GM12878 (cell line): ENCODE measurements at regions of chr20 and their contacts with region 1.

Region 1: DNA sequence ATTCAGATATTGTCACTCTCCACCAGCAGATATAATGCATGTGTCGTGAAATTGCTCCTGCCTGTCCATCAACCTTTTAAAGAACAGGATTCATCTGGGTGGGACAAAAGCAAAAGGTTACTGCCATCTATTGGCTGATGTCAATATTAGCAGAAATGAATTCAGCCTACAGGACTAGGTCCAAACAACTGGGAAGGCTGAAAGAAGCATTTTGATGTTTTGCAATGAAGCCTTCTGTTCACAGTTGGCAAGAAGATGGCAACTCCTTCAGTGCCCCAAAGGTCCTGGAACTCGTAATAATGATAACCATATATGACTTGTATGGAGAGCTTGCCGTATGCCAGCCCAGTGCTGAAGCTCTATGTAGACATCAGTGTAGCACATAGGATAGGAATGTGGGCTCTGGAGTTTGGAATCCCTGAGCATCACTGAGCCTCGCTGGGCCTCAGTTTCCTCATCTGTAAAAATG is 7.5 kb downstream of the BCAS1 start:
- DNase-seq: peak; percentile 82
- ATAC-seq: peak; percentile 42
- H3K4me3 ChIP-seq: no peak overlapping the region
- H3K27ac ChIP-seq: 0 out of 2 replicates have a peak overlapping the region, but pooled peaks have one; percentile 73
- H3K4me1 ChIP-seq: peaks cover 29% of the 10 kb centered on the region
- H3K27me3 ChIP-seq: no peaks in the 10 kb centered on the region
- CTCF ChIP-seq: peak; percentile 59 to 82 (median 73)
- EP300 ChIP-seq: no peak
- POLR2A ChIP-seq: no peak
- RAD21 ChIP-seq: peak; percentile 94

Region 2: DNA sequence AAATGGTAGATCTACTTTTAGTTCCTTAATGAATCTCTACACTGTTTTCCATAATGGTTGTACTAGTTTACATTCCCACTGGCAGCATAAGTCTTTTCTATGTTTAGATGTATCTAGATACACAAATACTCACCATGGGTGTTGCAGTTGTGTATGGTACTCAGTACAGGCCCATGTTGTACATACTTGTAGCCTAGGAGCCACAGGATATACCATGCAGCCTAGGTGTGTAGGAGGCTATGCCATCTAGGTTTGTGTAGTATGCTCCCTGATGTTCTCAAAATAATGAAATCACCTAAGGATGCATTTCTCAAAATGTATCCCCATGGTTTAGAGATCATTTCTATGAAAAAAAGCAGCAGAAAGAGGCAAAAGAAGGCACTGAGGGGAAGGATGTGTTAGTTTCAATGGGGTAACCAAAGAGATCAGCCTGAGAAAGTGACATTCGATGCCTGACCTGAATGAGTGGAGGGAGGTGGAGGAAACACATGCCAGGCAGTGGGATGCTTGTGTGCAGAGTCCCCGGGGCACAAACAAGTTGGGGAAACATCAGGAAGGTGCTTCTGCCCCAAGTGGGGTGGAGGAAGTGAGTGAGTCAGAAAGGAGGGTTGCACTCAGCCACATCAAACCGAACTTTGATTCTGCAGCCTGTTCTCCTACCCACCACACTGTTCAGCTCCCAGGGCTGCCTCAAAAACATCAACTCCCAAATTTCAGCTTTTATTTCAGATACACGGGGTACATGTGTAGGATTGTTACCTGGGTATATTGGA is 660.4 kb before region 1 on chr20:
- CTCF ChIA-PET with region 1: no interaction called
- POLR2A ChIA-PET with region 1: no interaction called
- RAD21 ChIA-PET with region 1: no interaction called
- SMC1A ChIA-PET with region 1: no interaction called
- in situ Hi-C with region 1: no loop called
- intact Hi-C with region 1: no loop called
- DNase-seq: no peak
- ATAC-seq: no peak
- H3K4me3 ChIP-seq: no peak overlapping the region
- H3K27ac ChIP-seq: no peak overlapping the region
- H3K4me1 ChIP-seq: no peaks in the 10 kb centered on the region
- H3K27me3 ChIP-seq: no peaks in the 10 kb centered on the region; a peak in 1 of 4 replicates
- CTCF ChIP-seq: no peak
- EP300 ChIP-seq: no peak
- POLR2A ChIP-seq: no peak
- RAD21 ChIP-seq: no peak

Region 3: GRCh38 chr20:53413186-53413631 is 649.6 kb before region 1 on chr20:
- CTCF ChIA-PET with region 1: interaction called, 31 read pairs
- POLR2A ChIA-PET with region 1: no interaction called
- RAD21 ChIA-PET with region 1: interaction called, 4 read pairs
- SMC1A ChIA-PET with region 1: interaction called, 7 read pairs
- in situ Hi-C with region 1: loop called (anchors 10 kb)
- intact Hi-C with region 1: loop called (anchors 5 kb)
- DNase-seq: peak; percentile 52
- ATAC-seq: peak; percentile 98
- H3K4me3 ChIP-seq: no peak overlapping the region
- H3K27ac ChIP-seq: no peak overlapping the region
- H3K4me1 ChIP-seq: peaks cover 2% of the 10 kb centered on the region; the same call in 1 of the 2 replicates
- H3K27me3 ChIP-seq: no peaks in the 10 kb centered on the region
- CTCF ChIP-seq: peak; percentile 87 to 96 (median 90)
- EP300 ChIP-seq: peak in 1 of 2 experiments; percentile 40; a peak in 1 of 4 replicates
- POLR2A ChIP-seq: no peak
- RAD21 ChIP-seq: peak; percentile 93

Region 4: DNA sequence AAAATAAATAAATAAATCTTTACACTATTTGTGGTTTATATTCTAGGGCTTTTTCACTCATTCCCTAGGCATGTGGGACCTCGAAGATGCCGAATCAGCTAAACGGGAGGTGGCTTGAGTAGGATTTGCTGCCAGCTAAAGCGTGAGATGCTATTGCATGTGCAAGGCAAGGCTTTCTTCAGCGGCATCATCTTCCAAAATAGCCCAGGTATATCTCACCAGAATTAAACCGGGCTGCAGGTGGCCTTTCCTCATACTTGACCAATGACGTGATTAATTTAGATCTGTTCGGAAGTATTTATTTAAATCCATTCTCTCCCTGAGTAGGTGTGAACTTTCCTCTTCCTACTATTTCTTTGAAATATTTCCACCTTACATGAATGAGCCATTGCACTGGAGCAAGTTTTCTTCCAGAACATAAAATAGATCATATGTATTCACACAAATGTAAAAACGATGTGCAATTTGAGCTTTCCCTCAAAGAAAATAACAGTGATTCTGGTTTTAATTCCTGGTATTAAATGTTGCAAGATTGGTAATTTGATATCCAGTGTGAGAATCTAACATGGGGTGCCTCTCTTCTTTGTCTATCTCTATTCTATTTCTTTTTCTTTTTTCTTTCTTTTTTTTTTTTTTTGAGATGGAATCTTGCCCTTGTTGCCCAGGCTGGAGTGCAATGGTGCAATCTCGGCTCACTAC is 444.9 kb before region 1 on chr20:
- CTCF ChIA-PET with region 1: no interaction called
- POLR2A ChIA-PET with region 1: no interaction called
- RAD21 ChIA-PET with region 1: no interaction called
- SMC1A ChIA-PET with region 1: no interaction called
- in situ Hi-C with region 1: no loop called
- intact Hi-C with region 1: no loop called
- DNase-seq: no peak
- ATAC-seq: no peak
- H3K4me3 ChIP-seq: no peak overlapping the region
- H3K27ac ChIP-seq: no peak overlapping the region
- H3K4me1 ChIP-seq: peaks cover 26% of the 10 kb centered on the region
- H3K27me3 ChIP-seq: no peaks in the 10 kb centered on the region
- CTCF ChIP-seq: no peak
- EP300 ChIP-seq: no peak
- POLR2A ChIP-seq: no peak
- RAD21 ChIP-seq: no peak

Region 5: GRCh38 chr20:53652090-53652858 is 410.6 kb before region 1 on chr20:
- CTCF ChIA-PET with region 1: no interaction called
- POLR2A ChIA-PET with region 1: no interaction called
- RAD21 ChIA-PET with region 1: no interaction called
- SMC1A ChIA-PET with region 1: no interaction called
- in situ Hi-C with region 1: no loop called
- intact Hi-C with region 1: loop called (anchors 10 kb)
- DNase-seq: peak; percentile 93
- ATAC-seq: peak; percentile 76
- H3K4me3 ChIP-seq: peak overlapping the region; percentile 30; the same call in 1 of the 2 replicates
- H3K27ac ChIP-seq: peak overlapping the region; percentile 99
- H3K4me1 ChIP-seq: peaks cover 39% of the 10 kb centered on the region
- H3K27me3 ChIP-seq: no peaks in the 10 kb centered on the region
- CTCF ChIP-seq: no peak
- EP300 ChIP-seq: peak; percentile 68 to 72; a peak in 2 of 4 replicates
- POLR2A ChIP-seq: no peak
- RAD21 ChIP-seq: peak; percentile 17; the same call in 1 of the 2 replicates

Region 6: DNA sequence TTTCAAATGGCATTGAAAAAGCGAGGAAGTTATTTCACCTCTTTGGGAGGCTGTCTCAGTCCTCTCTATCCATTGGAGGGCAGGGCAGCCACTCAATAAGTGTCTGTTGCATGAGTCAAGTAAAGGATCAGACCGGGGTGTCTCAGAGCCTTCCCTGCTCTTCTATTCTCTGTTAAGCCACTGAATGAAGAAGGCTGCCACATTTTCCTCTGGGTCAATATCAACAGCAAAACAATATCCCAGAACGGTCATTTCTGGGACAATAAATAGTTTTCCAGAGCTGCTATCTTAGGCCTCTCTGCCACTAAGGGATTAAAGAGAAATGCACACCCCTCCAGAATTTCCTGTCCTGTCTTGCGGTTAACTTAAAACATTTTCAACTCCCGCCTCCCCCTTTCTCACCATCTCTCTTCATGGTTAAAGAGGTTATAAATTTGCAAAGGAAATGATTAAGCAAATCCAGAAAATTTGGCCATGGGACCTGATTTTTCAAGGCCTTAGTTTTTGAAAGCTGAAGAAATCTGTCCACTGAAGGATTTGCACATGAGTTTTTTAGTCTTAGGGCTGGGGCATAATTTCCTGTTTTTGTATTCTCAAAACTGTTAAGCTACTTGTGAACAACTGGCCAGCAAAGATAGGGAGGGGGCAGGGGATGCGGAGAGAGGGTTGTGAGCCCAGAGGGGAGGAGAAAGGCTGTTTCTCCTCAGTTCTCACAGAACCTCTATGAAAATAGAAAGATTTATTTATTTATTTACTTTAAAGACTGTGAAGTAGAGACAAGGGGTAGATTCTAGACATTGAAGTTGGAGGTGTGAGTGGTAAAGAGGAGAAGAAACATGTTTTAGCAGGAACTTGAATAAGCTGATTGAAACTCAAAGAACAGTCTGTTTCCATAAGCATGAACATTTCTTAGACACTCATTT is 128.2 kb before region 1 on chr20:
- CTCF ChIA-PET with region 1: interaction called, 116 read pairs
- POLR2A ChIA-PET with region 1: interaction called, 9 read pairs
- RAD21 ChIA-PET with region 1: interaction called, 71 read pairs
- SMC1A ChIA-PET with region 1: interaction called, 110 read pairs
- in situ Hi-C with region 1: no loop called
- intact Hi-C with region 1: no loop called
- DNase-seq: no peak
- ATAC-seq: peak; percentile 77
- H3K4me3 ChIP-seq: peak overlapping the region; percentile 33; the same call in 1 of the 2 replicates
- H3K27ac ChIP-seq: peak overlapping the region; percentile 91
- H3K4me1 ChIP-seq: peaks cover 52% of the 10 kb centered on the region
- H3K27me3 ChIP-seq: no peaks in the 10 kb centered on the region
- CTCF ChIP-seq: 0 out of 6 replicates have a peak, but pooled peaks of 1 of the 3 experiments have one; percentile 4
- EP300 ChIP-seq: no peak
- POLR2A ChIP-seq: 0 out of 2 replicates have a peak, but pooled peaks have one; percentile 4
- RAD21 ChIP-seq: 0 out of 2 replicates have a peak, but pooled peaks have one; percentile 12

Region 7: GRCh38 chr20:53949319-53949889 is 113.4 kb before region 1 on chr20:
- CTCF ChIA-PET with region 1: interaction called, 53 read pairs
- POLR2A ChIA-PET with region 1: interaction called, 3 read pairs
- RAD21 ChIA-PET with region 1: interaction called, 9 read pairs
- SMC1A ChIA-PET with region 1: interaction called, 48 read pairs
- in situ Hi-C with region 1: loop called (anchors 5 kb)
- intact Hi-C with region 1: no loop called
- DNase-seq: no peak
- ATAC-seq: peak; percentile 93
- H3K4me3 ChIP-seq: peak overlapping the region; percentile 18; the same call in 1 of the 2 replicates
- H3K27ac ChIP-seq: peak overlapping the region; percentile 74
- H3K4me1 ChIP-seq: peaks cover 20% of the 10 kb centered on the region
- H3K27me3 ChIP-seq: no peaks in the 10 kb centered on the region
- CTCF ChIP-seq: no peak
- EP300 ChIP-seq: peak; percentile 65 to 82; a peak in 3 of 4 replicates
- POLR2A ChIP-seq: peak; percentile 48; the same call in 1 of the 2 replicates
- RAD21 ChIP-seq: no peak

Region 8: GRCh38 chr20:54017809-54018208 is 45.0 kb before region 1 on chr20:
- CTCF ChIA-PET with region 1: interaction called, 14 read pairs
- POLR2A ChIA-PET with region 1: interaction called, 4 read pairs
- RAD21 ChIA-PET with region 1: interaction called, 7 read pairs
- SMC1A ChIA-PET with region 1: interaction called, 9 read pairs
- in situ Hi-C with region 1: no loop called
- intact Hi-C with region 1: loop called (anchors 5 kb)
- DNase-seq: peak; percentile 88
- ATAC-seq: peak; percentile 96
- H3K4me3 ChIP-seq: peak overlapping the region; percentile 0; the same call in 1 of the 2 replicates
- H3K27ac ChIP-seq: peak overlapping the region; percentile 91
- H3K4me1 ChIP-seq: peaks cover 30% of the 10 kb centered on the region
- H3K27me3 ChIP-seq: no peaks in the 10 kb centered on the region
- CTCF ChIP-seq: no peak
- EP300 ChIP-seq: peak; percentile 89 to 93
- POLR2A ChIP-seq: no peak
- RAD21 ChIP-seq: no peak

Region 9: GRCh38 chr20:54132612-54133433 is 70.0 kb after region 1 on chr20:
- CTCF ChIA-PET with region 1: no interaction called
- POLR2A ChIA-PET with region 1: no interaction called
- RAD21 ChIA-PET with region 1: no interaction called
- SMC1A ChIA-PET with region 1: no interaction called
- in situ Hi-C with region 1: no loop called
- intact Hi-C with region 1: no loop called
- DNase-seq: no peak
- ATAC-seq: no peak; the same call in 2 of the 3 replicates
- H3K4me3 ChIP-seq: no peak overlapping the region
- H3K27ac ChIP-seq: no peak overlapping the region
- H3K4me1 ChIP-seq: no peaks in the 10 kb centered on the region
- H3K27me3 ChIP-seq: no peaks in the 10 kb centered on the region
- CTCF ChIP-seq: no peak
- EP300 ChIP-seq: no peak
- POLR2A ChIP-seq: no peak
- RAD21 ChIP-seq: no peak

Region 10: GRCh38 chr20:54199721-54200176 is 136.9 kb after region 1 on chr20:
- CTCF ChIA-PET with region 1: interaction called, 23 read pairs
- POLR2A ChIA-PET with region 1: no interaction called
- RAD21 ChIA-PET with region 1: interaction called, 3 read pairs
- SMC1A ChIA-PET with region 1: interaction called, 7 read pairs
- in situ Hi-C with region 1: no loop called
- intact Hi-C with region 1: no loop called
- DNase-seq: peak; percentile 39
- ATAC-seq: peak; percentile 71
- H3K4me3 ChIP-seq: no peak overlapping the region
- H3K27ac ChIP-seq: no peak overlapping the region
- H3K4me1 ChIP-seq: peaks cover 13% of the 10 kb centered on the region
- H3K27me3 ChIP-seq: no peaks in the 10 kb centered on the region
- CTCF ChIP-seq: peak; percentile 82 to 96 (median 94)
- EP300 ChIP-seq: no peak
- POLR2A ChIP-seq: no peak
- RAD21 ChIP-seq: peak; percentile 93